ENCODE measurements at regions of chr12 and their contacts with region 1.

Region 1: GRCh38 chr12:121399391-121400331 is at the start of gene RNF34:
- DNase-seq: peak; percentile 99
- H3K4me3 Mint-ChIP-seq: peak within 1 kb of the TSS; percentile 94
- H3K27ac Mint-ChIP-seq: peak within 1 kb of the TSS; percentile 96
- H3K4me1 Mint-ChIP-seq: peaks cover 33% of the 10 kb centered on the region
- H3K27me3 Mint-ChIP-seq: no peaks in the 10 kb centered on the region
- total RNA-seq, gene RNF34: 70.4 to 72.5 TPM

Region 2: DNA sequence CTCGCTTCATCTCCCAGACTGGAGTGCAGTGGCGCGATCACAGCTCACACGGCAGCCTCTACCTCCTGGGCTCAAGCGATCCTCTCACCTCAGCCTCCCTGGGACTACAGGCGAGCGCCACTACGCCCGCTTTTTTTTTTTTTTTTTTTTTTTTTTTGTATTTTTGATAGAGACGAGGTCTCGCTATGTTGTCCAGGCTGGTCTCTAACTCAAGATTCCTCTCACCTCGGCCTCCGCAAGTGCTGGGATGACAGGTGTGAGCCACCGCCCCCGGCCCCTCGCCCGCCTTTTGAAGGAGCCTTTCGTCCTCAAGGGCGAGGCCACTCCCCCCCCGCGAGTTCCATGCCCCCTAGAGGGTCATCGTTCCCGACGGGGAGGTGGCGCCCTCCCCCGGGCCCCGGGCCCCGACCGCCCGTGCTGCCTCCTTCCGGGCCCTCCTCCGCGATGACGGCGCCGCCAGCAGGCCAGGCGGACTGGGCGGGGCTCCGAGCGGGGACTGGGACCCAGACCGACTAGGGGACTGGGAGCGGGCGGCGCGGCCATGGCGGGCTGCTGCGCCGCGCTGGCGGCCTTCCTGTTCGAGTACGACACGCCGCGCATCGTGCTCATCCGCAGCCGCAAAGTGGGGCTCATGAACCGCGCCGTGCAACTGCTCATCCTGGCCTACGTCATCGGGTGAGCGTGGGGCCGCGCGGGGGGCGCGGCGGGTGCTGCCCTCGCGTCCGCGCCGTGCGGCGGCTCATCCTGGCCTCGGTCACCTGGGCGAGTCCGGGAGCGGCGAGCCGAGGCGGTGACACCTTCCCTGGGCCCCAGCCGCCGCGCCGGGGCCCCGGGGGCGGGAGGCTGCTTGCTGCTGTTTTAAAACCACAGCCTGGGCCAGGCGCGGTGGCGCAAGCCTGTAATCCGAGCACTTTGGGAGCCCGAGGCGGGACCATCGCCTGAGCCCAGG is 189.8 kb before region 1 on chr12 and contains the start of gene P2RX4:
- CTCF ChIA-PET with region 1: no interaction called
- POLR2A ChIA-PET with region 1: no interaction called
- intact Hi-C with region 1: loop called (anchors 5 kb)
- DNase-seq: peak; percentile 93
- H3K4me3 Mint-ChIP-seq: peak within 1 kb of the TSS; percentile 82
- H3K27ac Mint-ChIP-seq: peak within 1 kb of the TSS; percentile 87
- H3K4me1 Mint-ChIP-seq: peaks cover 35% of the 10 kb centered on the region
- H3K27me3 Mint-ChIP-seq: no peaks in the 10 kb centered on the region
- total RNA-seq, gene P2RX4: 53.4 to 57.5 TPM

Region 3: GRCh38 chr12:121334513-121335343 is 64.9 kb before region 1 on chr12:
- CTCF ChIA-PET with region 1: interaction called, 19 read pairs
- POLR2A ChIA-PET with region 1: interaction called, 5 read pairs
- intact Hi-C with region 1: loop called (anchors 2 kb)
- DNase-seq: no peak
- H3K4me3 Mint-ChIP-seq: no peak overlapping the region
- H3K27ac Mint-ChIP-seq: no peak overlapping the region
- H3K4me1 Mint-ChIP-seq: no peaks in the 10 kb centered on the region
- H3K27me3 Mint-ChIP-seq: no peaks in the 10 kb centered on the region

Region 4: GRCh38 chr12:121467115-121467793 is 67.6 kb after region 1 on chr12:
- CTCF ChIA-PET with region 1: no interaction called
- POLR2A ChIA-PET with region 1: no interaction called
- intact Hi-C with region 1: loop called (anchors 2 kb)
- DNase-seq: peak; percentile 91
- H3K4me3 Mint-ChIP-seq: peak overlapping the region; percentile 29
- H3K27ac Mint-ChIP-seq: peak overlapping the region; percentile 13
- H3K4me1 Mint-ChIP-seq: peaks cover 19% of the 10 kb centered on the region
- H3K27me3 Mint-ChIP-seq: no peaks in the 10 kb centered on the region

Measured in activated CD4-positive, alpha-beta memory T cell treated with anti-CD3 and anti-CD28 coated beads for 36 hours (primary cell).